CD4-positive, alpha-beta memory T cell (primary cell): ENCODE measurements at regions of chr4 and their contacts with region 1.

Region 1: DNA sequence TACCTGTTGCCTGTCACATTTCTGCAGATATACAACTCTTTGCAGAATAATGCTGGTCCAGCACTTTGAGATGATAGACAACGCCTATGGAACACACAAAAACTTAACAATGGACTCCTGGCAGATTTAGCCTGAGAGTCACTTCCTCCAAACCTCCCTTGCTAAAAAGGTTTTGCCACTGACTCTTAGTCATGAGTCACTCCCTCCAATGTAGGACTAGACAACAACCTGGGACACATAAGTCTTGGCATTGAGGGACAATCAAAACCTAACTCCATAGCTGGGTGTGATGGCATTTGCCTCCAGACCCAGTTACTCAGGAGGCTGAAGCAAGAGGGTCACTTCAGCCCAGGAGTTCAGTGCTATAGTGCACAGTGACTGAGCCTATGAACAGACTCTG is 22.0 kb upstream of the EIF4E start:
- DNase-seq: no peak
- H3K4me3 ChIP-seq: no peak overlapping the region
- H3K4me3 Mint-ChIP-seq: no peak overlapping the region
- H3K27ac ChIP-seq: no peak overlapping the region
- H3K27ac Mint-ChIP-seq: no peak overlapping the region
- H3K4me1 ChIP-seq: no peaks in the 10 kb centered on the region
- H3K4me1 Mint-ChIP-seq: no peaks in the 10 kb centered on the region
- H3K27me3 ChIP-seq: no peaks in the 10 kb centered on the region
- H3K27me3 Mint-ChIP-seq: peaks cover 8% of the 10 kb centered on the region in 2 donors

Region 2: GRCh38 chr4:98939892-98940298 is 11.0 kb before region 1 on chr4:
- CTCF ChIA-PET with region 1: interaction called, 12 read pairs
- POLR2A ChIA-PET with region 1: no interaction called
- intact Hi-C with region 1: no loop called
- DNase-seq: peak in 4 of 5 donors; percentile 21 to 32 (median 26)
- H3K4me3 ChIP-seq: no peak overlapping the region
- H3K4me3 Mint-ChIP-seq: no peak overlapping the region
- H3K27ac ChIP-seq: no peak overlapping the region
- H3K27ac Mint-ChIP-seq: no peak overlapping the region
- H3K4me1 ChIP-seq: no peaks in the 10 kb centered on the region
- H3K4me1 Mint-ChIP-seq: peaks cover 0 to 12% (median 5%) of the 10 kb centered on the region in 4 donors
- H3K27me3 ChIP-seq: no peaks in the 10 kb centered on the region
- H3K27me3 Mint-ChIP-seq: no peaks in the 10 kb centered on the region

Region 3: DNA sequence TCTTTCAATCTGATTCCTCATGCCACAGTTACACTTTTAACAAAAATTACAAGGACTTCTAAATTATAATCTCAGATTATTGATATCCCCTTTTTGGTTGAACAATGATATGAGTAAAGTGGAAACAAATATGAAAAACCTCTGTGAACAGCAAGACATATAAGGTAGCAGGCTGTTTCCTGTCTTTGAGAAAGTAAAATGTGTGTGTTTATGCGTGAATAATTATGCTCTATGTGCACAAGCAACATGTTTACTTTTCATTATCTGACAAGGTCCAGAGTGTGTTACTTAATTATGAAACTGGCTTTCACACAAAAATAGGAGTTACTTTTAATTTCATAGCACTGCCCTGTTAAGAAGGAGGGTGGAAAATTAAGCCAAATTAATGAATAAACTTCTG is 1196.3 kb after region 1 on chr4:
- CTCF ChIA-PET with region 1: no interaction called
- POLR2A ChIA-PET with region 1: no interaction called
- intact Hi-C with region 1: no loop called
- DNase-seq: no peak
- H3K4me3 ChIP-seq: no peak overlapping the region
- H3K4me3 Mint-ChIP-seq: no peak overlapping the region
- H3K27ac ChIP-seq: no peak overlapping the region
- H3K27ac Mint-ChIP-seq: no peak overlapping the region
- H3K4me1 ChIP-seq: no peaks in the 10 kb centered on the region
- H3K4me1 Mint-ChIP-seq: no peaks in the 10 kb centered on the region
- H3K27me3 ChIP-seq: no peaks in the 10 kb centered on the region
- H3K27me3 Mint-ChIP-seq: peaks cover 0 to 3% of the 10 kb centered on the region in 2 donors